ENCODE measurements at regions of chr3 and their contacts with region 1.

Region 1: GRCh38 chr3:172699031-172699430 is 11.8 kb downstream of the NCEH1 start:
- DNase-seq: no peak
- H3K4me3 Mint-ChIP-seq: no peak overlapping the region
- H3K27ac Mint-ChIP-seq: no peak overlapping the region
- H3K4me1 Mint-ChIP-seq: peaks cover 2% of the 10 kb centered on the region
- H3K27me3 Mint-ChIP-seq: no peaks in the 10 kb centered on the region

Region 2: DNA sequence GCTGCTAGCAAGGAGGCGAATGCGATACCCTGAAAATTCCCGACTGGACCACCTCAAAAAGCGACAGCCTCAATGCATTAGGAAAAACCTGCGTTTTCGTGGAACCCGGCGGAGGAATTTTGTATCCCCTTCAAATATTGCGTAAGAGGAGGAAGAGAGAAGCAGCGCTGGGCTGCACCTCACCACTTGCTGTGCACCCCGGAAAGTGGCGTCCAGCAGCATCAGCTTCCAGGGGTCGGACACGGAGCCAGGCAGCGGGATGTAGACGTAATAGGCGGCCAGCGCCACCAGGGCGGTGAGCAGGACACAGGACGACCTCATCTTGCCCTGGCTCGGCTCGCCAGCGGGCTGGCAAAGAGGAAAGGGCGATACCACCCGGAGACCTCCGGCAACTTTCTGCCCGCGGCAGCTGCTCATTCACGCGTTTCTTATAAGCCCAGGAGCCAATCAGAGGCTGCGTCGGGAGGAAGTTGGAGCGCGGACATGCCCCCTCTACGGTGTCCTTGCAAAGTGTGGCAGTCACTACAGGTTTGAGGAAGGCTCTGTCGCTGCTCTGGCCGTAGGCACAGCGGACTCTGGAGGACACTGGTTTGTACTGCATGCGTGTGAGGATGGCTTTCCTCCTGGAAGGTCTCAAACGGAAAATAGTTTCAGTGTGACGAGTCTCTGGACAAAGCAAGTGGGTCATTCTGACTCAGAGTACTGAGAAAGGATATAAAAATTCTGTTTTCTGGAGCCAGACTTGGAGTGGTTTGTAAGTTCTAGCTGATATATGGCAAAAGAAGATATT is 11.8 kb after region 1 on chr3 and contains the start of gene NCEH1:
- CTCF ChIA-PET with region 1: interaction called, 10 read pairs
- DNase-seq: peak; percentile 86
- H3K4me3 Mint-ChIP-seq: peak within 1 kb of the TSS; percentile 90
- H3K27ac Mint-ChIP-seq: peak within 1 kb of the TSS; percentile 64
- H3K4me1 Mint-ChIP-seq: peaks cover 16% of the 10 kb centered on the region
- H3K27me3 Mint-ChIP-seq: peaks cover 22% of the 10 kb centered on the region

Region 3: GRCh38 chr3:173238091-173238490 is 539.1 kb after region 1 on chr3:
- CTCF ChIA-PET with region 1: no interaction called
- DNase-seq: no peak
- H3K4me3 Mint-ChIP-seq: no peak overlapping the region
- H3K27ac Mint-ChIP-seq: no peak overlapping the region
- H3K4me1 Mint-ChIP-seq: no peaks in the 10 kb centered on the region
- H3K27me3 Mint-ChIP-seq: no peaks in the 10 kb centered on the region

Measured in activated naive CD4-positive, alpha-beta T cell treated with anti-CD3 and anti-CD28 coated beads, Interleukin-2, amount 10 ng/mL, durations not matched to agents 7 days and 5 days (primary cell).